Endothelial cell of umbilical vein (primary cell): ENCODE measurements at regions of chr5 and their contacts with region 1.

Region 1: GRCh38 chr5:142290577-142291299 is 34.1 kb downstream of the SPRY4 start:
- DNase-seq: peak; percentile 59
- H3K4me3 ChIP-seq: no peak overlapping the region
- H3K27ac ChIP-seq: peak overlapping the region; percentile 48
- H3K4me1 ChIP-seq: peaks cover 55% of the 10 kb centered on the region
- H3K27me3 ChIP-seq: no peaks in the 10 kb centered on the region
- CTCF ChIP-seq: no peak
- POLR2A ChIP-seq: no peak

Region 2: GRCh38 chr5:142201471-142201887 is 89.3 kb before region 1 on chr5:
- CTCF ChIA-PET with region 1: interaction called, 5 read pairs
- POLR2A ChIA-PET with region 1: no interaction called
- dilution Hi-C with region 1: no loop called
- intact Hi-C with region 1: loop called (anchors 1 kb)
- DNase-seq: peak; percentile 85
- H3K4me3 ChIP-seq: no peak overlapping the region
- H3K27ac ChIP-seq: peak overlapping the region; percentile 91
- H3K4me1 ChIP-seq: peaks cover 40% of the 10 kb centered on the region
- H3K27me3 ChIP-seq: no peaks in the 10 kb centered on the region
- CTCF ChIP-seq: no peak
- POLR2A ChIP-seq: peak; percentile 58

Region 3: GRCh38 chr5:142211918-142212317 is 78.8 kb before region 1 on chr5:
- CTCF ChIA-PET with region 1: no interaction called
- POLR2A ChIA-PET with region 1: no interaction called
- dilution Hi-C with region 1: no loop called
- intact Hi-C with region 1: no loop called
- DNase-seq: no peak
- H3K4me3 ChIP-seq: no peak overlapping the region
- H3K27ac ChIP-seq: no peak overlapping the region
- H3K4me1 ChIP-seq: peaks cover 10% of the 10 kb centered on the region
- H3K27me3 ChIP-seq: no peaks in the 10 kb centered on the region
- CTCF ChIP-seq: no peak
- POLR2A ChIP-seq: no peak

Region 4: DNA sequence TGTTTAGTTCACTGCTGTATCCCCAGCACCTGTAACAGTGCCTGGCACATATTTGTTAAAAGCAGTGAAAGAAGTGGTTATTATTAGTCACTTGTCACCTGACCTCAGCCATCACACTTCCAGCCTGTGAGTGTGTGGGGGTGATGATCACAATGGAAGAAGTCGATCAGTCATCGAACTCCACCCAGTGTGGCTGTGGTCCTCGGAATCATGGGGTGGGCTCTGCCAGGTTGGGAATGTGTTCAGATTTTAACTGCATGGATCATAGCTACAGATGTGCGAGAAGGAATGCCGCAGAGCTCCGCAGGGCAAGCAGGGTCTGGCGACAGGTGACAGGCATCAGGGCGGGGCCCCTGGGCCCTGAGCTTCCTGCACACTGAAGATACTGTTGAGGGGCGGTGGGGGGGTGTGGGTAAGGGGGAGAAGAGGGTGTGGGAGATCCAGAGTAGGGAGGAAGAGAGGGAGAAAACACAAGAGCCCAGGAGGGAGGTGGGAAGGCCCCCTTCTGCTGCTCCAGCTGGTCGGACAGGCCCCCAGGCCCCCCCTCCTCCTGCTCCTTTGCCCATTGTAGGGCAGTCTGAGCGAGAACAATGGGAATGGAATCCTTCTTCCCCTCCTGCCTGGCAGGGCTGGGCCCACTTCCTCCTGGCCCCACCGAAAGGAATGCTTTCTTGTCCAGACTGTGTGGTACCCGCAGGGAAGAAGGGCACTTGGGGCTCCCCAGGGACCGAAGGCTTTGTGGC is 55.5 kb before region 1 on chr5:
- CTCF ChIA-PET with region 1: no interaction called
- POLR2A ChIA-PET with region 1: no interaction called
- dilution Hi-C with region 1: no loop called
- intact Hi-C with region 1: loop called (anchors 2 kb)
- DNase-seq: peak; percentile 65
- H3K4me3 ChIP-seq: no peak overlapping the region
- H3K27ac ChIP-seq: peak overlapping the region; percentile 19
- H3K4me1 ChIP-seq: peaks cover 15% of the 10 kb centered on the region
- H3K27me3 ChIP-seq: no peaks in the 10 kb centered on the region
- CTCF ChIP-seq: no peak
- POLR2A ChIP-seq: no peak

Region 5: GRCh38 chr5:142246258-142246657 is 44.5 kb before region 1 on chr5:
- CTCF ChIA-PET with region 1: interaction called, 3 read pairs
- POLR2A ChIA-PET with region 1: no interaction called
- dilution Hi-C with region 1: no loop called
- intact Hi-C with region 1: loop called (anchors 1 kb)
- DNase-seq: peak; percentile 23
- H3K4me3 ChIP-seq: no peak overlapping the region
- H3K27ac ChIP-seq: peak overlapping the region; percentile 66
- H3K4me1 ChIP-seq: peaks cover 13% of the 10 kb centered on the region
- H3K27me3 ChIP-seq: no peaks in the 10 kb centered on the region
- CTCF ChIP-seq: no peak
- POLR2A ChIP-seq: no peak

Region 6: GRCh38 chr5:142316051-142316450 is 25.3 kb after region 1 on chr5:
- CTCF ChIA-PET with region 1: interaction called, 4 read pairs
- POLR2A ChIA-PET with region 1: interaction called, 3 read pairs
- dilution Hi-C with region 1: no loop called
- intact Hi-C with region 1: loop called (anchors 1 kb)
- DNase-seq: peak; percentile 82
- H3K4me3 ChIP-seq: no peak overlapping the region
- H3K27ac ChIP-seq: peak overlapping the region; percentile 57
- H3K4me1 ChIP-seq: peaks cover 68% of the 10 kb centered on the region
- H3K27me3 ChIP-seq: no peaks in the 10 kb centered on the region
- CTCF ChIP-seq: no peak
- POLR2A ChIP-seq: no peak

Region 7: DNA sequence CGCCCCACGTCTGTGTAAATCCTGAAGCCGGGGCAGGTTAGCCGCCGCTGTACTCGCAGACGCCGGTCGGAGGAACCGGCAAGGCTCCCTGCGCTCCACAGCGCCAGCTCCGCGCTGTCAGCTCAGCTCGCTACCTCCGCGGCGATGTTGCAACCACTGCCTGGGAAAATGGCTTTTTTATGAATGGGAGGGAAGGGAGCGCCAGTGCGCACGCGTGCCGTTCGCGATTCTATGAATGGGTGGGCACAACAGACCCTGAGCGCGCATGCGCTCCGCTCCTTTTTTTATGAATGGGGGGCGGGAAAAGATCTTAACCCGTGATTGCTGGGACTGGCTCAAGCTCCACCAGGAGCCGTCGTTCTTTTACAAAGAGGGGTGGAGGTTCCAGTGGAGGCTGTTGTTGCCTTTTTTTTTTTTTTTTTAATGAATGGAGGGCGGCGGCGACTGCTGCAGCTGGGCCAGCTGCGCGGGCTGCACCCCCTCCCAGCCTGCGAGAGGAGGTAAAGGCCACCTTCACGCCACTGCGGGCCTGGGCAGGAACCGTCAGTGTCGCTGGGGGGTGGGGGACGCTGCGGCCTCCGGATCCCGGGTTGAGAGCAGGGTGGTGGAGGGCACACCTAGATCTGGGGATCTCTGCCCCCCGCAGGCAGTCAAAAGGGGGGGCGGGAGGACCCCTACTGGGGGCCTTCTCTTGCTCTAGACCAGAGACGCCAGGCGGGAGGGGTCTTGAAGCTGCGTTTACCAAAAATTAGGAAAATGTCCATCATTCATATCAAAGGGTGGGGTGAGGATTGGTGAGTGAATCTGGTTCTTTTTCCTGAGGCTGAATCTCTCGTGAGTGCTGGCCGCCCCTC is 34.4 kb after region 1 on chr5 and contains the start of gene SPRY4:
- CTCF ChIA-PET with region 1: interaction called, 5 read pairs
- POLR2A ChIA-PET with region 1: interaction called, 4 read pairs
- dilution Hi-C with region 1: no loop called
- intact Hi-C with region 1: loop called (anchors 1 kb)
- DNase-seq: peak; percentile 98
- H3K4me3 ChIP-seq: peak within 1 kb of the TSS; percentile 76 to 89 (median 81)
- H3K27ac ChIP-seq: peak within 1 kb of the TSS; percentile 88
- H3K4me1 ChIP-seq: peaks cover 48% of the 10 kb centered on the region
- H3K27me3 ChIP-seq: no peaks in the 10 kb centered on the region
- CTCF ChIP-seq: no peak
- POLR2A ChIP-seq: peak; percentile 97
- total RNA-seq, gene SPRY4: 33.9 and 49.5 TPM in 2 replicates

Region 8: DNA sequence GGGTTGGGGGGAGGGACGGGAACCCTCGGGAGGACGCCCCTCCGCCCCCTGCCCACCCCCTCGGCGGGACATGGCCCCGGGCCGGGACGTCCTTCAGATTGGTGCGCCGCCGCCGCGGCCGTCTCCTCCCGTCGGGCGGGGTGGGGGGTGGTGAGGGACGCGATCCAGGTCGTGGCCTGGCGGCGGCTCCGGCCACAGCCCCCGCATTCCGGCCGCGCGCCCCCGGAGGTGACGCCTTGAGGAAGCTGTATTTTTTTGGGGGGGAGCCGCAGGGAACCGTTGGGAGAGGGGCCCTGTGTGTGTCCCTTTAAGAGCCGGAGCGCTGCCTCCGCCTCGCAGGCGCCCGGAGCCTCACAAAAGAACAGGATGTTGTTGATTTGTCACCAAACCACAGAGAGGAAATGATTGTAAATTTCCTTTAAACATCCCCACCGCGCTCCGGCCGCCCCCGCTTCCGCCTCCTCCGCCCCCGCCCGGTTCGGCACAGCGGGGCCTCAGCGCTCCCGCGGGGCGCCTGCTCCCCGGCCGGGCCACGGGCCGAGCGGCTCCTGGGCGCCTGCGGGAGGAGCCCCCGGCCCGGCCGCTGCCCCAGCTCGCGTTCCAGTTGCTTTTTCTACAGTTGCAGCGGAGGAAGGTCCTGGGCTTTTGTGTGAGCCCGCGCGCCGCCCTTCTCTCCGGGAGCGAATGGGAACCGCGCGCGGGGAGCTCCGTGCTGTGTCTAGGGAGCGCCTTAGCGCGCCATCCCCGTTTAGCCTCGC is 66.2 kb after region 1 on chr5:
- CTCF ChIA-PET with region 1: no interaction called
- POLR2A ChIA-PET with region 1: no interaction called
- dilution Hi-C with region 1: no loop called
- intact Hi-C with region 1: loop called (anchors 1 kb)
- DNase-seq: peak; percentile 94
- H3K4me3 ChIP-seq: peak overlapping the region in 1 of 3 experiments; percentile 54
- H3K27ac ChIP-seq: peak overlapping the region; percentile 74
- H3K4me1 ChIP-seq: peaks cover 31% of the 10 kb centered on the region
- H3K27me3 ChIP-seq: no peaks in the 10 kb centered on the region
- CTCF ChIP-seq: no peak
- POLR2A ChIP-seq: peak; percentile 47

Region 9: DNA sequence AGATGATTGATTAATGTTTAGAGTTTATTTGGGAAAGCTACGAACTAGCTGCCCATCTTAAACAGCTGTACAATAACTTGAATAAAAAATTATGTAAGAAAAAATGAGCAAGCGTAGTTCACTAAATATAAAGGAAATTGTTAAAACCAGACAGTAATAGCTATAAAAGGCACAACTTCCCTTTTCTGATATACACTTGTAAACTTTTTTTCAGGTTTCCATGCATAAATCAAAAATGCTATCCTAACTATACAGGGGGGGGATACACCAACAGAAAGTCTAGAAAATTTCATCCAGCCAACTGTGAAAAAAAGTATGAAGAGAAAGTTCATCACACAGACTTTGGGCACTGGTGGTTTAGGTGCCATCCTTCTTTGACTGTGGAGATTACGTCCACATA is 990.5 kb after region 1 on chr5:
- CTCF ChIA-PET with region 1: no interaction called
- POLR2A ChIA-PET with region 1: no interaction called
- dilution Hi-C with region 1: no loop called
- intact Hi-C with region 1: no loop called
- DNase-seq: no peak
- H3K4me3 ChIP-seq: no peak overlapping the region
- H3K27ac ChIP-seq: no peak overlapping the region
- H3K4me1 ChIP-seq: no peaks in the 10 kb centered on the region
- H3K27me3 ChIP-seq: no peaks in the 10 kb centered on the region
- CTCF ChIP-seq: no peak
- POLR2A ChIP-seq: no peak

Region 10: GRCh38 chr5:143557061-143557818 is 1266.5 kb after region 1 on chr5:
- CTCF ChIA-PET with region 1: no interaction called
- POLR2A ChIA-PET with region 1: no interaction called
- dilution Hi-C with region 1: no loop called
- intact Hi-C with region 1: no loop called
- DNase-seq: no peak
- H3K4me3 ChIP-seq: no peak overlapping the region
- H3K27ac ChIP-seq: no peak overlapping the region
- H3K4me1 ChIP-seq: no peaks in the 10 kb centered on the region
- H3K27me3 ChIP-seq: no peaks in the 10 kb centered on the region
- CTCF ChIP-seq: no peak
- POLR2A ChIP-seq: no peak